ENCODE measurements at regions of chr16 and their contacts with region 1.

Region 1: DNA sequence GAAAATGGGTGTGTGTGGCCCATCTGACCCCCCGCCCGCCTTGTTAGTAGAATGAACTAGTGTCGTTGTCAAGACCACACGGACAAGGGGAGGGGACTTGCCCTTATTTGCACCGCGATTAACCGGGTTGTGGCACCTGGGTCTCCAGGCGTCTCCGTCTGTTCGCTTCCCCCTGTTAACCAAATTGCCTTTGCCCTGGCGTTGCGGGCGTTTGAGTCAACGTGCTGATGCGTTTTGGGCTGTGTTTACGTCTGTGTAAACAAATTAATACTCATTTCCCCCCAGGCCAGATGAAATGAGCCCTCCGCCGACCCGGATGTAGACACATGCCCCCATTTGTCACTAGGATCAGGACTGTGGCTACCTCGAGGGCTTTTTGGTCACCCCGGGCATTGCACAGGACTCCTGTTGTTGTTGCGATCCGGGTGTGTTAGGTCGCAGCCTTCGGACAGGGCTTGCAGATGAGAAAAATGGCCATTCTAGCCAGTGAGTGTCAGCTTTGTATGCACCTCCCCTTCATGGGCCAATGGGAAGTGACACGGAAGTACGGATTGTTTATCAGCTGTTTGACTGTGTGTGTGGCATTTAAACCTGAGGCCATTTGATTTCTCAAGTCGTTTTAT is 906 bp downstream of the RBL2 start:
- DNase-seq: peak; percentile 79
- H3K4me3 Mint-ChIP-seq: peak overlapping the region; percentile 86
- H3K27ac Mint-ChIP-seq: peak overlapping the region; percentile 94
- H3K4me1 Mint-ChIP-seq: peaks cover 50% of the 10 kb centered on the region
- H3K27me3 Mint-ChIP-seq: no peaks in the 10 kb centered on the region

Region 2: DNA sequence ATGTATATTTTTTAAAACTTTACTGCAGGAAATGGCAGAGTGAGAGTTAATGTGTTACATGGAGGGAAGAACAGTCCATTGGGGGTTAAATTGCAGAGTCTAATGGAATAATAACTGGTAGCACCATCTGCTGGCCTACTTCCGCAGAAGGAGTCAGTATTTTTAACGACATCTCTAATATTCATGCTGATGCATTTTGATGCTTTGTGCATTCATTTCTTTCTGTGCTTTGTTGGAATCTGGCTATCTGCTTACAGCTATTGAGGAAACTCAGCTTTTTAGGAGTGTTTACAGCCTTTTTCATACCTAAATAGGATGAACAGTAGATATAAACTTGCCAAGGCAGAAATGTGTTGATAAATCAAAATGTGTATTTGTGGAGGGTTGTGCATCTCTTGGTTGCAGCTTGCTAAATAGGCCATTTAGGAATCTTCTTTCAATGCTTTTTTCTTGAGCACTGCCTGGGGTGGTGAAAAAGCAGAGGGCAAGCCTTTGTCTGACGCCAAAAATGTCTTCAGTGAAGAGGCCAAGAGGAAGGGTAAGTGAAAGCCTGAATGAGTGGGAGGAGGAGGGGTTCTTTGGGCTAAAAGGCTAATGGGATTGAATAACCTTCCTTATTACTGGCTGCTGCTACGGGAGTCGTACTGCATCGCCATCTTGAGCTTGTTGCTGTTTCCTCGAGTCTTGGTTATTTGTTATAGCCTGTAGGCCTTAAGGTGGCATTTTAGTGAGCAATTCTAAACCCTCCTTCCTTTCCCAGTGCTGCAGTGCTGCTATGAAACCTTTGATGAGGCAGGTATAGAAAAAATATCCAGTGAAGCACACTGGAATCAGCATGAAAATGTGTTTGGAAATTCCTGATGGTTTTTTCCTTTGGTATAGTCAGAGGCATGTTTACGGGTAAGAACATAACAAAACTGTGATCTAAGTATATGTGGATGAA is 227.1 kb before region 1 on chr16:
- CTCF ChIA-PET with region 1: no interaction called
- POLR2A ChIA-PET with region 1: no interaction called
- DNase-seq: peak; percentile 25
- H3K4me3 Mint-ChIP-seq: peak overlapping the region; percentile 69
- H3K27ac Mint-ChIP-seq: peak overlapping the region; percentile 90
- H3K4me1 Mint-ChIP-seq: peaks cover 19% of the 10 kb centered on the region
- H3K27me3 Mint-ChIP-seq: no peaks in the 10 kb centered on the region

Region 3: DNA sequence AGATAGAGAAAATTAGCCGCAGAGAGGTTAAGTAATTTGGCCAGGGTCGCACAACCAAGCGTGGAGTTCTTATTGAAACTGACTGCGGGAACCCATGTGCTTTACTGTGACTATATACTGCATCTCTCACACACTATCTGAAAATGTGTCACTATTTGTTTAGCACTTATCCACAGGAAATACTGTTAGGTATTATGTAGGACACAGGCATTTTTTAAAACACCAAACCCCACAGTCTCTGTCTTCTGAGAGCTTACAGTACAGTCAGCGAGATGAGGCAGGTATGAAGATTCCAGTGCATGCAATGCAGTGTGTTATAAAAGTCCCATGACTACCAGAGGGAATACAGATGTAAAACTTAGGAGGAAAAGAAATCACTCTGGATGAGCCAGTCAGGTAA is 10.4 kb after region 1 on chr16:
- CTCF ChIA-PET with region 1: interaction called, 16 read pairs
- POLR2A ChIA-PET with region 1: no interaction called
- DNase-seq: no peak
- H3K4me3 Mint-ChIP-seq: peak overlapping the region; percentile 23
- H3K27ac Mint-ChIP-seq: peak overlapping the region; percentile 74
- H3K4me1 Mint-ChIP-seq: peaks cover 33% of the 10 kb centered on the region
- H3K27me3 Mint-ChIP-seq: no peaks in the 10 kb centered on the region

Measured in activated CD4-positive, alpha-beta T cell treated with anti-CD3 and anti-CD28 coated beads, Interleukin-2, amount 10 ng/mL, durations not matched to agents 7 days and 5 days (primary cell).